ENCODE measurements at regions of chr5 and their contacts with region 1.

Region 1: GRCh38 chr5:104186100-104186499 is 623.5 kb upstream of the NUDT12 start:
- DNase-seq: no peak
- H3K4me3 ChIP-seq: no peak overlapping the region
- H3K27ac ChIP-seq: no peak overlapping the region
- H3K4me1 ChIP-seq: no peaks in the 10 kb centered on the region
- H3K27me3 ChIP-seq: no peaks in the 10 kb centered on the region
- CTCF ChIP-seq: no peak
- POLR2A ChIP-seq: no peak

Region 2: GRCh38 chr5:103582364-103582763 is 603.7 kb before region 1 on chr5:
- intact Hi-C with region 1: loop called in 1 of 2 experiments (anchors 10 kb)
- DNase-seq: peak; percentile 12 to 65 (median 30)
- H3K4me3 ChIP-seq: no peak overlapping the region
- H3K27ac ChIP-seq: no peak overlapping the region
- H3K4me1 ChIP-seq: peaks cover 0 to 2% of the 10 kb centered on the region in 2 donors
- H3K27me3 ChIP-seq: no peaks in the 10 kb centered on the region
- CTCF ChIP-seq: peak; percentile 20 to 60 (median 50)
- POLR2A ChIP-seq: no peak

Region 3: DNA sequence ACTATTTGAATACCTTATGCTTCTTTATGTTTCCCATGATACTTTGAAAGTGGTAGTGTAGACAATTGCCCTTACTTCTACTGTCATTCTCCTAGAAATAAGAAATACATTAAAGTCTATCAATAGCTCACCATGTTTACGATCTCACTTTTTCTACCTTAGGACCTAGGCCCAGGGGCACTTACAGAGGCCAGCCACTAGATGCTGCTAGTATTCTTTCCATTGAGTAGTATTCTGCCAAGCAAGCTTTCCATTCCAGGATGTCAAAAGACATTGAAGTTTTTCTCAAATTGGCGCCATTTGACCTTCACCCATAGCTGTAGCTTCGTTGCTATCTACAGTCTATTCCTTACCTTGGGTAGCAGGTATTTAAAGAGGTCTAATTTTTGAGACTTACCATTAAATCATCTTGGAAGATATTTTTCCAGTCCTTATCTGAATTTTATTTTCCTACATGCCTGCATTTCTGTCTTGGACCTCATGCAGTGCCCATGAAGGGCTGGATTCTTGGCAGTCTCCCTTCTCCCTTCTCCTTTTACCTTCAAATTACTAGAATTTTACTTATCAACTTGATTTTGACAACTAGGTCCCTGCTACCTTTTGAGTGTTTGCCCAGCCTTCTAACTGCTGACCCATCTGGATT is 377.5 kb before region 1 on chr5:
- intact Hi-C with region 1: loop called in 1 of 2 experiments (anchors 10 kb)
- DNase-seq: peak; percentile 18 to 75 (median 42)
- H3K4me3 ChIP-seq: no peak overlapping the region
- H3K27ac ChIP-seq: no peak overlapping the region
- H3K4me1 ChIP-seq: no peaks in the 10 kb centered on the region
- H3K27me3 ChIP-seq: no peaks in the 10 kb centered on the region
- CTCF ChIP-seq: peak; percentile 84 to 93 (median 90)
- POLR2A ChIP-seq: no peak

Region 4: GRCh38 chr5:104146652-104147051 is 39.4 kb before region 1 on chr5:
- intact Hi-C with region 1: no loop called
- DNase-seq: no peak
- H3K4me3 ChIP-seq: no peak overlapping the region
- H3K27ac ChIP-seq: no peak overlapping the region
- H3K4me1 ChIP-seq: no peaks in the 10 kb centered on the region
- H3K27me3 ChIP-seq: no peaks in the 10 kb centered on the region
- CTCF ChIP-seq: no peak
- POLR2A ChIP-seq: no peak